Activated naive CD4-positive, alpha-beta T cell treated with anti-CD3 and anti-CD28 coated beads for 36 hours (primary cell): ENCODE measurements at regions of chr20 and their contacts with region 1.

Region 1: DNA sequence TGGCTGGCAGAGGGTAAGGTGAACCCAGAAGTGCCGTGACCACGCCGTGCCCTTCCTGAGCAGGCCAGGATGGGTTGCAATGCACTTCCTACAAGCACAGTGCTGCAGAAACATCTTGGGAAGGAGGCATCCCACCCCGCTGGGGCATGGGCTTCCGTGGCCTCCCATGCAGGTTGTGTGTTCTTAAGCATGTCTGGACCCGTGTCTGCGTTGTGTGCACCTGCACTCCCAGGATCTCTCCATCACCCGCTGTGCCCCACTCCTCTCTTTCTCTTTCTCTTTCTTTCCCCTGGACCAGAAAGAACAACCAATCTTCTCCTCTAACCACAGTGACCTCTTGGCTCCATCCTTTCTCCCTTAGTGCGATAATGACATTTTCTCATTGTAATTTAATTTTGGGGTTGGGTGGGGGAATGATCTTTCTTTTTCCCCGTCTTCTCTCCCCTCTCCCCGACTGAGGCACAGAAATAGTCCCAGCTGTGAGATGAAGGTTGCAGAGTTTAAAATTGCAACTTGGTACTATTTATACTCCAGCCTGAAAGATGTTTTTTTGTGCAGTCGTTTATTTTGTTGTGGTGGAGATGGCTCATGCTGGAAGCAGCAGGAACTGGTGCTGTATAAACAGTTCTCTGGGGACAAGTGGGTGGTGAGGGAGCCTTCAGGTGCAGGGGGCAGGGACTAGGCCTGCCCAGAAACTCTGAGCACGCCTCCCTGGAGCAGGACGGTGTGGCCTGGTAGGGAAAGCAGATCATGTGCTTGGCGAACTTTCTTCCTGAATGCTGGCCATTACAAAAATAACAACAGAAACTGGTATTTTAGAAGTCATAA is 20.5 kb downstream of the BCAS4 start:
- DNase-seq: peak; percentile 45
- H3K4me3 Mint-ChIP-seq: peak overlapping the region; percentile 59
- H3K27ac Mint-ChIP-seq: peak overlapping the region; percentile 83
- H3K4me1 Mint-ChIP-seq: peaks cover 54% of the 10 kb centered on the region
- H3K27me3 Mint-ChIP-seq: no peaks in the 10 kb centered on the region

Region 2: DNA sequence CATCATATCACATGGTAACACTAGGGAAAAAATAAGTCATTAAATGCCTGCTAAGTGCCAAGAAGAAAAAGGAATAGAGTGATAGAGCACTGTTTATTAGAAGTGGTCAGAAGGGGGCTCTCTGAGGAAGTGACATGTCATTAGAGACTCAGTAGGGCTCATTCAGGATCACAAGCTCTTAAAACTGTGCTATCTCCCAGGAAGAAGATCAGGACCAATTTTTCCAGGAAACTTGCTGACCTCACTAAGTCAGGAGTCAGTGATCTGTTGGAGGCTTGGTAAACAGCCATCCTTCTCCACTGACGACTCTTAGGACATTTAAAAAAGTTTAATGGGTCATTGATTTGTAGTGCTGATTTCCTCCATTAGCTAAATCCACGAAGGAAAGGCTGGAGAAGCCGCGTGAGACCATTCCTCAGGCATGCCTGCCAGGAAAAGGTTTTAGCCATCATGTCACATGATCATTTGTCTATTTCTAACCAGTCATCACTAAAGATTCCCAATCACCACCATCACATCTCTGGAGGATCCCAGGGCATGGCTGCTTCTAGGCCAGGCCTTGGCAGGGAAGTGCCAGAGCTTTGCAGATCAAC is 311.0 kb before region 1 on chr20:
- CTCF ChIA-PET with region 1: no interaction called
- intact Hi-C with region 1: no loop called
- DNase-seq: no peak
- H3K4me3 Mint-ChIP-seq: no peak overlapping the region
- H3K27ac Mint-ChIP-seq: no peak overlapping the region
- H3K4me1 Mint-ChIP-seq: peaks cover 15% of the 10 kb centered on the region
- H3K27me3 Mint-ChIP-seq: no peaks in the 10 kb centered on the region

Region 3: DNA sequence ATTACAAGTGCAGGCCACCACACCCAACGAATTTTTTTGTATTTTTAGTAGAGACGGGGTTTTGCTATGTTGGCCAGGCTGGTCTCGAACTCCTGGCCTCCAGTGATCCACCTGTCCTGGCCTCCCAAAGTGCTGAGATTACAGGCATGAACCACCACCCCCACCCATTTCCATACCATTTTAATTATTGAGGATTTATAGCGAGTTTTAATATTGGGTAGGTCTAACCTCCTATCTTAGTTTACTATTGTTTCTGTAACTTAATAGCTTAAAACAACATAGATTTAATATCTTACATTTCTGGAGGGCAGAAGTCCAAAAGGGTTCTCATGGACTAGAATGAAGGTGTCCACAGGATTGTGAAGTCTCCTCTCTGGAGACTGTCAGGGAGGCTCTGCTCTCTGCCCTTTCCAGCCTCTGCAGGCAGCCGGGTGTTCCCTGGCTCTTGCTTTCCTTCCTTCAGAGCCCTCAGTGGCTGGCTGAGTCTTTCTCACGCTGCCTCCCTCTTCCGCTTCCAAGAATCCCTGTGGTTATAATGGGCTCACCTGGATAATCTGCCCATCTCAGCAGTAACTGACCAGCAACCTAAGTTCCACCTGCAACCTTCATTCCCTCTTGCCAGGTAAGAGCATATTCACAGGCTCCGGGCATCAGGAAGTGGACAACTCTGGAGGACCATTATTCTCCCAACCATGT is 39.1 kb before region 1 on chr20:
- CTCF ChIA-PET with region 1: no interaction called
- intact Hi-C with region 1: no loop called
- DNase-seq: no peak
- H3K4me3 Mint-ChIP-seq: no peak overlapping the region
- H3K27ac Mint-ChIP-seq: no peak overlapping the region
- H3K4me1 Mint-ChIP-seq: no peaks in the 10 kb centered on the region
- H3K27me3 Mint-ChIP-seq: peaks cover 3% of the 10 kb centered on the region

Region 4: DNA sequence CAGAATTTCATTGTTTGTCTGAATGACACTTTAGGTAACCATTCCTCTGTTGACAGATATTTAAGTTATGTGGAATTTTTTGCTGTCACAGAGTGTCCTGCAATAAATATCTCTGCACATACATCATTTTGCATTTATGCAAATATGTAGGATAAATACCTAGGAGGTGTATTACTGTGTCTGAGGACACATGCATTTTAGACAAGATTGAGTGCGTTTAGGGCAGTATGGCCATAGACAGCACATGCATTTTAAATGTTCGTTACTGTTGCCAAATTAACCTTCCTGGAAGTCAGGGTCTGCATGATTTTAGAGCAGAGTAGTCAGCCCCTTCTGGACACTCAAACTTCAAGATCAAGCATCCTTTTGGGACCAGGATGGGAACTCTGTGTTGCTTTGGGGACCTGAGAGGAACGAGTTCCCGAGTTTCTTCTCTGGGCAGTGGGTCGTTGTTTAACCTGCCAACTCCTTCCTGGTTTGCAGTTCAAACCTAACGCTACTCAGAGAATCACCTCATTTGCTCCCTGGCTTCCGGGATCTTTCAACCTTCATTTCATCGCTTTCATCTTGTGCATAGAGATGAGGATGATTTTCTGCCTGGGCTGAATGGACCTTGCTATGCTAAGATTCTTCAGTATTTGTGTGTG is 10.8 kb before region 1 on chr20:
- CTCF ChIA-PET with region 1: interaction called, 5 read pairs
- intact Hi-C with region 1: loop called (anchors 1 kb)
- DNase-seq: peak; percentile 61
- H3K4me3 Mint-ChIP-seq: peak overlapping the region; percentile 64
- H3K27ac Mint-ChIP-seq: peak overlapping the region; percentile 91
- H3K4me1 Mint-ChIP-seq: peaks cover 32% of the 10 kb centered on the region
- H3K27me3 Mint-ChIP-seq: no peaks in the 10 kb centered on the region

Region 5: DNA sequence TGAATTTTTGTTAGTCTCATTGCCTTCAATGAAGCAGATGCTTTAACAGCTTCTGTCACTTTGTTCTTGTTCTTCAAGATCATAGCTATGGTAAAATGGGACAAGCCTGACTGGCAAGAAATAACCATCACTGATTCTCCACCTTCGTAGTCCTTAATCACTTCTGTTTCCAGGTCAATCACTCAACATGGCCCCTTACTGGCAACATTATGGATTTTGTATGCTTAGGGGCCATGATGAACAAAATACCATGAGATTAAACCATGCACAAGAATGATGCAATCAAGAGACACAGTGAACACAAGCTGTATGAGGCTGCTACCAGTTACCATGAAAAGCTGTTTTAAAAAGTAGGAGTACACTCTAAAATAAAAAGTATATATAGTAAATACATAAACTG is 83.1 kb after region 1 on chr20:
- CTCF ChIA-PET with region 1: no interaction called
- intact Hi-C with region 1: no loop called
- DNase-seq: no peak
- H3K4me3 Mint-ChIP-seq: no peak overlapping the region
- H3K27ac Mint-ChIP-seq: peak overlapping the region; percentile 69
- H3K4me1 Mint-ChIP-seq: peaks cover 15% of the 10 kb centered on the region
- H3K27me3 Mint-ChIP-seq: no peaks in the 10 kb centered on the region

Region 6: GRCh38 chr20:50913690-50914375 is 98.5 kb after region 1 on chr20:
- CTCF ChIA-PET with region 1: no interaction called
- intact Hi-C with region 1: loop called (anchors 5 kb)
- DNase-seq: peak; percentile 53
- H3K4me3 Mint-ChIP-seq: no peak overlapping the region
- H3K27ac Mint-ChIP-seq: peak overlapping the region; percentile 80
- H3K4me1 Mint-ChIP-seq: peaks cover 83% of the 10 kb centered on the region
- H3K27me3 Mint-ChIP-seq: no peaks in the 10 kb centered on the region

Region 7: DNA sequence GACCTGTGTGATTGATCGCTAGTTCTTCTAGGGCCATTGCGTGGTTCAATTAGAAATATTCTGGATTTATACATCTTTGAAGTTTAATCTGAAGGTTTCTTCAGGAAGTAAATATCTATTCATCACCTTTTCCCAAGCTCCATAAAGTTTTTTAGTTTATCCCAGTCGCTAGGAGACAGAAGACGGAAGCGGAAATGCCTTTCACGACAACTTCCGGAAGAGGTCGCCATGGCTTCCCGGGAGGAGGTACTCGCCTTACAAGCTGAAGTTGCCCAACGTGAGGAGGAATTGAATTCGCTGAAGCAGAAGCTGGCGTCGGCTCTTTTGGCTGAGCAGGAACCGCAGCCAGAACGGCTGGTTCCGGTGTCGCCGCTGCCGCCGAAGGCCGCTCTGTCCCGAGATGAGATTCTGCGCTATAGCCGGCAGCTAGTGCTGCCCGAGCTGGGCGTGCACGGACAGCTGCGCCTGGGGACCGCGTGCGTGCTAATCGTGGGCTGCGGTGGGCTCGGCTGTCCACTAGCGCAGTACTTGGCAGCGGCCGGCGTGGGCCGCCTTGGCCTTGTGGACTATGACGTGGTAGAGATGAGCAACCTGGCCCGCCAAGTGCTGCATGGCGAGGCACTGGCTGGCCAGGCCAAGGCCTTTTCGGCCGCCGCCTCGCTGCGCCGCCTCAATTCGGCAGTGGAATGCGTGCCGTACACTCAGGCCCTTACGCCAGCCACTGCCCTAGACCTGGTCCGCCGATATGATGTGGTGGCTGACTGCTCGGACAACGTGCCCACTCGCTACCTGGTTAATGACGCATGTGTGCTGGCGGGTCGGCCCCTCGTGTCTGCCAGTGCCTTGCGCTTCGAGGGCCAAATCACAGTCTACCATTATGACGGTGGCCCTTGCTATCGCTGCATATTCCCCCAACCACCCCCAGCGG is 143.5 kb after region 1 on chr20 and contains the start of gene MOCS3:
- CTCF ChIA-PET with region 1: no interaction called
- intact Hi-C with region 1: loop called (anchors 1 kb)
- DNase-seq: peak; percentile 86
- H3K4me3 Mint-ChIP-seq: peak within 1 kb of the TSS; percentile 89
- H3K27ac Mint-ChIP-seq: peak within 1 kb of the TSS; percentile 99
- H3K4me1 Mint-ChIP-seq: peaks cover 62% of the 10 kb centered on the region
- H3K27me3 Mint-ChIP-seq: no peaks in the 10 kb centered on the region
- total RNA-seq, gene MOCS3: 1.6 to 2.2 TPM